Spleen (tissue), 13 donors: ENCODE measurements at regions of chr7 and their contacts with region 1.

Region 1: GRCh38 chr7:31122649-31123058 is 70.5 kb downstream of the ADCYAP1R1 start:
- DNase-seq: no peak
- H3K4me3 ChIP-seq: no peak overlapping the region
- H3K27ac ChIP-seq: no peak overlapping the region
- H3K4me1 ChIP-seq: no peaks in the 10 kb centered on the region
- H3K27me3 ChIP-seq: peaks cover 0 to 3% (median 0%) of the 10 kb centered on the region in 7 donors
- CTCF ChIP-seq: peak in 9 of 11 experiments; percentile 52 to 85 (median 70)
- POLR2A ChIP-seq: no peak

Region 2: DNA sequence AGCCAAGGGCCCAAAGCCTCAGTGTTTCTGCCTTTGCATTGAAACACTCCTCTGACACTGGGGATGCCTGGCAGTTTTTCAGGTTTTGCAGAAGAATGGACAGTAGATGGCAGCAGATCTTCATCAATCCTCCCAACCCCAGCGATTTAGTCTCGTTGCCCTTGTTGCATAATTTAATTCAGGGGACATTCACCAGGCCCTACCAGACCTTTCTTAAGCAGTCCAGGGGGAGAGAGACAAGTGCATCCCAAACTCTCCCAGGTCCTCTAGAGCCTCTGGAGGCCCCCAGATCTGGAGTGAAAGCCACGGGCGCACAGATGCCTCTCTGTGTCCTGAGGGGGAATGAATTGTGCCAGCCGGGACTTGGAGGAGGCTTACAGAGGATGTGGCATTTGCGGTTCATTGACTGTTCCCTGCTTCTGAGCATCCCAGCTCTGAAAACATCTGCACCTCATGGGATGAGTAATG is 321.8 kb before region 1 on chr7:
- intact Hi-C with region 1: loop called (anchors 5 kb)
- DNase-seq: no peak
- H3K4me3 ChIP-seq: no peak overlapping the region
- H3K27ac ChIP-seq: no peak overlapping the region
- H3K4me1 ChIP-seq: peaks cover 0 to 22% (median 3%) of the 10 kb centered on the region in 6 donors
- H3K27me3 ChIP-seq: no peaks in the 10 kb centered on the region
- CTCF ChIP-seq: peak; percentile 36 to 74 (median 56)
- POLR2A ChIP-seq: no peak

Region 3: GRCh38 chr7:30983042-30983913 is 139.4 kb before region 1 on chr7:
- intact Hi-C with region 1: loop called (anchors 2 kb)
- DNase-seq: peak; percentile 92
- H3K4me3 ChIP-seq: peak overlapping the region in 1 of 8 donors; percentile 37
- H3K27ac ChIP-seq: no peak overlapping the region
- H3K4me1 ChIP-seq: peaks cover 0 to 12% (median 5%) of the 10 kb centered on the region in 6 donors
- H3K27me3 ChIP-seq: peaks cover 0 to 69% (median 11%) of the 10 kb centered on the region in 7 donors
- CTCF ChIP-seq: peak; percentile 66 to 96 (median 89)
- POLR2A ChIP-seq: no peak

Region 4: GRCh38 chr7:31550432-31550831 is 427.8 kb after region 1 on chr7:
- intact Hi-C with region 1: no loop called
- DNase-seq: no peak
- H3K4me3 ChIP-seq: no peak overlapping the region
- H3K27ac ChIP-seq: no peak overlapping the region
- H3K4me1 ChIP-seq: no peaks in the 10 kb centered on the region
- H3K27me3 ChIP-seq: no peaks in the 10 kb centered on the region
- CTCF ChIP-seq: no peak
- POLR2A ChIP-seq: no peak